H1 (cell line): ENCODE measurements at regions of chr3 and their contacts with region 1.

Region 1: DNA sequence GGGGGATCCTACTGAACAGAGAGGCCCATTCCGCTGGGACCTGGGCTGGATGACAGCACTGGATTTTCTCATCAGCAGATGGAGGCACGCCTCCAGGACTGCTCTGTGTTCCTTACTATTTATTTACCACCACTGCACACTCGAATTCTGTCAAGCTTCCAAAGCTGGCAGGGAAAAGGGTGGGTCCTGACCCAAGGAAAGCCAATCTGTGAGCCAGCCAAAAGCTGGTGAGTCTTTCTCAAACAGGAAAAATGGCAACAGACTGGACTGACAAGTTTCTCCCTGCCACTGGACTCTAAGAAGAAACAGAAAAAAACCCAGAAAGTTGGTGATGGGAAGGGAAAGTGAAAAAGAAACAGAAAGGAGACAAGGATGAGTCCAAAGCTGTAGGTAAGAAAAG is 37.8 kb downstream of the CD47 start:
- DNase-seq: no peak
- H3K4me3 ChIP-seq: no peak overlapping the region
- H3K27ac ChIP-seq: no peak overlapping the region
- H3K4me1 ChIP-seq: no peaks in the 10 kb centered on the region
- H3K27me3 ChIP-seq: no peaks in the 10 kb centered on the region
- CTCF ChIP-seq: no peak
- EP300 ChIP-seq: no peak
- POLR2A ChIP-seq: no peak
- RAD21 ChIP-seq: no peak

Region 2: GRCh38 chr3:107987036-107987947 is 65.8 kb before region 1 on chr3:
- CTCF ChIA-PET with region 1: no interaction called
- POLR2A ChIA-PET with region 1: no interaction called
- DNase-seq: no peak
- H3K4me3 ChIP-seq: no peak overlapping the region
- H3K27ac ChIP-seq: no peak overlapping the region
- H3K4me1 ChIP-seq: no peaks in the 10 kb centered on the region
- H3K27me3 ChIP-seq: no peaks in the 10 kb centered on the region
- CTCF ChIP-seq: no peak
- EP300 ChIP-seq: no peak
- POLR2A ChIP-seq: no peak
- RAD21 ChIP-seq: no peak

Region 3: DNA sequence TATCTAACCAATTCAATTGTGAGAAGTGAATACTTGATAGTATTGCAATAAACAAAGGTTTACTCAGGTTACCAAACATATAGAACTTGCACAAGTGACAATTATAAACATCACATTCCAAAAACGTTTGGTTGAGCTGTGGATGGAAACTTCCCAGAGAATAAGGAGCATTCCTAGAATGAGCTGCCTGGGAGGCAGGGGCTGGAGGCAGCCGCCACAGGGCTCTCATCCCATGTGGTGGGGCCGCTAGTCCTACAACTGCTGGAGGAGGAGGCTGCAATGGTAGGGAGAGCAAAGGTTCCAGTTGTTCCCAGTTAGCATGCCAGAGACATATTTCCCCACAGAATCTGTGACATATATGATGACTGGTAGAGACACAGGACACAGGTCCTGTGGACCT is 12.6 kb before region 1 on chr3:
- CTCF ChIA-PET with region 1: interaction called, 10 read pairs
- POLR2A ChIA-PET with region 1: no interaction called
- DNase-seq: no peak
- H3K4me3 ChIP-seq: no peak overlapping the region
- H3K27ac ChIP-seq: no peak overlapping the region
- H3K4me1 ChIP-seq: no peaks in the 10 kb centered on the region; a peak in 2 of 7 replicates
- H3K27me3 ChIP-seq: no peaks in the 10 kb centered on the region
- CTCF ChIP-seq: no peak
- EP300 ChIP-seq: no peak
- POLR2A ChIP-seq: no peak
- RAD21 ChIP-seq: no peak